Caco-2 (cell line): ENCODE measurements at regions of chr16 and their contacts with region 1.

Region 1: DNA sequence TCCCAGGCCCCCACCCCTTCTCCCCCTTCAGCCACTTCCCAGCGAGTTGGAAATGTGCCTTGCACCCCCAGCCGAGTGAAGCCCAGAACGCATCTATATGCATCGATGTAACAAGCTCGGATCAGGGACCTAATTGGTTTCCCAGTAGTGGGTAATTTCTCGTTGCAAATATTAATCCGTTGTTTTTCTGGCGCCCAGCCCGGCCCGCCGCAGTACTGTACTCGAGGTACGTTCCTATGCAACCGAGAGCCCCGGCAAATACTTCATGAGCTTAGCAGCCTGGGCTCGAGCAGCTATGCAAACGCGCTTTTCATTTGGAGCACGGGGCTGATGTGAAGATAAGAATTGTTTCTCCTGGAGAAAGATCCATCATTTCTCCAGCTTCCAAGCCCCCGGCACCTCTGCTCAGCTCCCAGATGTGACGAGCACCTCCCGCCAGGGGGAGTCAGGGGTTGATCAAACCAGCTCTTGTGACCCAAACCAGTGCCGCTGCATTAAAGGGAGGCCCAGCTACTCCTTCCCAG is 229.8 kb downstream of the KATNIP start:
- DNase-seq: peak; percentile 60 to 64
- H3K4me3 ChIP-seq: no peak overlapping the region
- H3K4me3 Mint-ChIP-seq: no peak overlapping the region
- H3K27ac Mint-ChIP-seq: no peak overlapping the region
- H3K4me1 ChIP-seq: no peaks in the 10 kb centered on the region
- H3K4me1 Mint-ChIP-seq: no peaks in the 10 kb centered on the region
- H3K27me3 ChIP-seq: no peaks in the 10 kb centered on the region
- H3K27me3 Mint-ChIP-seq: no peaks in the 10 kb centered on the region
- CTCF ChIP-seq: peak; percentile 34 to 63

Region 2: DNA sequence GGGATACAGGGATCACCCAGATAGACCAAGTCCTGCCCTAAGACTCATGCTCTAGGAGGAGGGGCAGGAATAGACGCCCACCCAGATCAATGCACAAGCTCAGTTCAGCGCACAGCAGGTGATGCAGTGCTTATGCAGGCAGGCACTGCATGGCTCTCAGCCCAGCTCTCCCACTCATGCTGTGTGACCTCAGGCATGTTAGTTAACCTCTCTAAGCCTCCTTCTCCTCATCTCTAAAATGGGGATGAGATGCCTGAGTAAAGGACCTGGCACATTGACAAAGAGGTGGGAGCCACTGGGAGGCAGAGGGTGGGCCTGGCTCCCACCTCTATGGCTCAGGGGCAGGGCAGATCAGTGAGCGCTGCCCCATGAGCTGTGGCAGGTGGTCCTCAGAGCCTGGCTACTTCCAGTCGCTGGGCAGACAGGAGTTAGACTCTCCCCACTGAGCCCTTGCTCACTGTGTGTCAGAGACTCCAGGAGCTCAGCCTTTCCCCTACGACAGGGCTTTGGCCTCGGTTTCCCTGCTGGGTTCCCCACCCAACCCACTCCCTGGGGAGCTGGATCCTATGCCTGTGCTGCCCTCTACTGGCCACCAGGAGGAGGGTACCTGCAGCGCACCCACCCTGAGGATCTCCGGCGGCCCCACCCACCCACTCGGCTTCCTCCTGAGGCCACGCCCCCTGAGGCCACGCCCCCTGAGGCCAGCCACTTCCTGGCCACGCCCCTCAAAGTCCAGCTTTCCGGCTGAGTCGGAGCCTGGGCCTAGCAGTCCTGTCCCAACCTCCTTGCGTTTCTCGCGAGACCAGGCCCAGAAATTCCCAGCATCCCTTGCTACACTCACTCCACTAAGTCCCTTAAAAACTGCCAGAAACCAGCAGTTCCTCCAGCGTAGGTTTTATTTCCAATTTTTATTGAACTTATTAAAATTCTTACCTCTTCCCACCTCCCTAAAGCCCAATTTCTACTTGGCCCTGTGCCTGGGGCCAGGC is 87.7 kb after region 1 on chr16:
- CTCF ChIA-PET with region 1: interaction called, 8 read pairs
- POLR2A ChIA-PET with region 1: no interaction called
- intact Hi-C with region 1: loop called (anchors 5 kb)
- DNase-seq: peak; percentile 61 to 71
- H3K4me3 ChIP-seq: no peak overlapping the region
- H3K4me3 Mint-ChIP-seq: no peak overlapping the region
- H3K27ac Mint-ChIP-seq: no peak overlapping the region
- H3K4me1 ChIP-seq: no peaks in the 10 kb centered on the region
- H3K4me1 Mint-ChIP-seq: no peaks in the 10 kb centered on the region
- H3K27me3 ChIP-seq: no peaks in the 10 kb centered on the region
- H3K27me3 Mint-ChIP-seq: peaks cover 4% of the 10 kb centered on the region
- CTCF ChIP-seq: peak; percentile 14 to 24